Endothelial cell of umbilical vein (primary cell): ENCODE measurements at regions of chr15 and their contacts with region 1.

Region 1: DNA sequence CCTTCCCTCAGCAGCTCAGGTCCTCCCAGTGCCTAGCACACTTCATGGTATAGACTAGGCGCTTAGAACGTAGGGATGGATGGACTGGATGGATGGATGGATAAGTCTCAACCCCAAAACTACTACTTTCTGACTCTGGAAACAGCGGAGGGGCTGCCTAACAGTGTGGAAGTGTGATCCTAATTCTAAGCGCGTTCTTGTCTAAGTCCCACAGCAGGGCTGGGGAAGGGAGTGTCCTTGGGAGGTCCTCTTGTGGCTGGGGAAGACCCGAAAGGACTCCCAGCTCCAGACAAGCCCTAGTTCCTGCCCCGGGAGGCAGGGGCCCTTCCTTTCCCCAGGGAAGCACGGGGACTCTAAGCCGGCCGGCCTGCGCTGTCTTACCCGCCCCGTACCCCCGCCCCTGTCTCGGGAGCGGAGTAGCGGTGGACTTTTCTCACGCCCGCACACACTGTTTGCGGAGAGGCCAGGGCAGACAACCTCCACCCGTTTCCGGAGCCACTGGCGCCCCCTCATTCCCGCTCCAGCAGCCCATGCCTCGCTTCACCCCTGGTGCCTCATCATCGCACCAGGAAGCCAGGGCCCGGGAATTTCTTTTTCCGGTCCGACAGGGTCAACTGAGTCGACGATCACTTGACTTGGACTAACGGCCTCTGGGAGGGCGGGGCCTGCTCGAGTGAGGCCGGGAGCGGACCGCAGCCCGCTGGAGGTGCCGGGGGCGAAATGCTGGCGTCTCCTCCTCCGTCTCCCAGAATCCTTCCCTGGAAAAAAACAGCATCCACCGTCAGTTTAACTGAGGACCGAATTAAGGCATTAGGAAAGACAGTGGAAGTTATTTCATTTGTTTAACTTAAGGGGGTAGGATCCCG is 133.3 kb downstream of the TBC1D2B start:
- DNase-seq: peak; percentile 82
- H3K4me3 ChIP-seq: peak overlapping the region; percentile 21 to 50 (median 46)
- H3K27ac ChIP-seq: peak overlapping the region; percentile 34
- H3K4me1 ChIP-seq: peaks cover 6% of the 10 kb centered on the region
- H3K27me3 ChIP-seq: no peaks in the 10 kb centered on the region
- CTCF ChIP-seq: no peak
- POLR2A ChIP-seq: peak; percentile 40

Region 2: GRCh38 chr15:77907824-77908751 is 36.1 kb before region 1 on chr15:
- CTCF ChIA-PET with region 1: interaction called, 4 read pairs
- POLR2A ChIA-PET with region 1: no interaction called
- dilution Hi-C with region 1: no loop called
- intact Hi-C with region 1: loop called (anchors 1 kb)
- DNase-seq: no peak
- H3K4me3 ChIP-seq: no peak overlapping the region
- H3K27ac ChIP-seq: no peak overlapping the region
- H3K4me1 ChIP-seq: no peaks in the 10 kb centered on the region
- H3K27me3 ChIP-seq: peaks cover 0 to 3% of the 10 kb centered on the region in 2 experiments
- CTCF ChIP-seq: peak; percentile 54 to 61
- POLR2A ChIP-seq: no peak